PC-3 (cell line): ENCODE measurements at regions of chr15 and their contacts with region 1.

Region 1: DNA sequence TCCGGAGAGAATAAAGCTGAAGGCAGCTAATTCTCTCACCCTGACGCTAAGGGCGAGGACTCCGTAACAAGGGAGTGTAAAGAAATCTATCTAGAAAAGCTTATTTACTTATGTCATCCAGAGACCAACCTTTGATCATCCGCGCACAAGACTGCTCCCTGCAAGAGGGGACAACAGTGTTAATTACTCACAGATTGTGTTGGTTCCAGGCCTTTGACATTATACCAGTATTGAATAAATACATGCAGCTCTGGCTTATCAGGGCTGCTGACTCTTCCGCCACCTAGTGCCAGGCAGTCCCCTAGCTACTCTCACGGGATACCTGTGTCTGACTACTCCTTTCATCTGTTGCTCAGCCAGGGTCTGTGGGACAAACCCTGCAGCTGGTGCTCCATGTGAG is 211.7 kb downstream of the DTWD1 start:
- DNase-seq: peak; percentile 52
- ATAC-seq: peak; percentile 83
- H3K4me3 ChIP-seq: no peak overlapping the region
- H3K27ac ChIP-seq: peak overlapping the region; percentile 80
- H3K4me1 ChIP-seq: peaks cover 18% of the 10 kb centered on the region
- H3K27me3 ChIP-seq: no peaks in the 10 kb centered on the region
- CTCF ChIP-seq: peak; percentile 58

Region 2: DNA sequence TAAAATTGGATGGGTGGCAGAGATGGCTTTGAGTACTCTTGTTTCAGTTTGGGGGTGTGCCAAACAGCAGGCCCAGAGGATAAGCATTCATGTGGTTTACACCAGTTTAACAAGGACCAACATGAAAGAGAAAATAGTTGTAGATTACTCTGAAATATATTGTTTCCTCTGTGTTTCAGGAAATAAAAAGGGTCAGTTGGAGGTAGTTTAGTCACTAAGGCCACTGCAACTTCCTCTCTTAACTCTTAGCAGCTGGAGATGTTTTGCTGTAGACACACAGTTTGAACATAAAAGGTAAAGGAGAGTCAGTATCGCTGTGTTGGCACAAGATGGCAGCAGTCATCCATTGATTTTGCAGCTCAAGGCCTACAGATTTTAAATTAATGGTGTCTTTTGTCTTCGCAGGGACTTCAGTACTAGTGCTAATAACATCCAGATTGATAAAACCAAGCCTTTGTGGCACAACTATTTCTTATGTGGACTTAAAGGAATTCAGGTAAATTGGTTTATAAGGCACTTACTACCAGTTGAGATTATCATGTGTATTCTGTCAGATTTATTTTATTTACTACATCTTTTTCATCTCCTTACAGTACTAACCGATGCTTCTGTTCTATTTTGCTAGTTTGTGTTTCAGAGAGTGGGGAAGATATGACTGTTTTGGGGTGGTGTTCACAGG is 596.9 kb before region 1 on chr15:
- CTCF ChIA-PET with region 1: no interaction called
- POLR2A ChIA-PET with region 1: no interaction called
- intact Hi-C with region 1: loop called (anchors 2 kb)
- DNase-seq: peak; percentile 60
- ATAC-seq: peak; percentile 88
- H3K4me3 ChIP-seq: no peak overlapping the region
- H3K27ac ChIP-seq: 0 out of 2 replicates have a peak overlapping the region, but pooled peaks have one; percentile 10
- H3K4me1 ChIP-seq: peaks cover 5% of the 10 kb centered on the region; the same call in 1 of the 2 replicates
- H3K27me3 ChIP-seq: no peaks in the 10 kb centered on the region
- CTCF ChIP-seq: peak; percentile 81

Region 3: DNA sequence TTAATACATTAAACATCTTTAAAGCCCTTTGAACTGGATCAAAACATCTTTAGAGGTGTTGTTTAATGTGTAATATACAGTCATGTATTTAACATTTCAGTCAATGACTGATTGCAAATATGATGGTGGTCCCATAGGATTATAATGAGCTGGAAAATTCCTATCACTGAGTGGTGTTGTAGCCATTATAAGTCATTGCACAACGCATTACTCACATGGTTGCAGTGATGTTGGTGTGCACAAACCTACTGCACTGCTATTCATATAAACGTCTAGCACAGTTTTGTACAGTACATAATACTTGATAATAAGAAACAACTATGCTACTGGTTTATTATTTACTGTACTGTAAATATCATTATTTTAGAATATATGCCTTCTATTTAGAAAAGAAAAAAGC is 136.1 kb before region 1 on chr15:
- CTCF ChIA-PET with region 1: no interaction called
- POLR2A ChIA-PET with region 1: no interaction called
- intact Hi-C with region 1: no loop called
- DNase-seq: no peak
- ATAC-seq: no peak
- H3K4me3 ChIP-seq: no peak overlapping the region
- H3K27ac ChIP-seq: no peak overlapping the region
- H3K4me1 ChIP-seq: no peaks in the 10 kb centered on the region
- H3K27me3 ChIP-seq: no peaks in the 10 kb centered on the region
- CTCF ChIP-seq: no peak